ENCODE measurements at regions of chr5 and their contacts with region 1.

Region 1: GRCh38 chr5:38780950-38781349 is 64.9 kb upstream of the OSMR start:
- DNase-seq: no peak
- H3K4me3 ChIP-seq: no peak overlapping the region
- CTCF ChIP-seq: peak; percentile 33

Region 2: GRCh38 chr5:38673671-38674071 is 107.3 kb before region 1 on chr5:
- CTCF ChIA-PET with region 1: no interaction called
- POLR2A ChIA-PET with region 1: no interaction called
- DNase-seq: no peak
- H3K4me3 ChIP-seq: no peak overlapping the region
- CTCF ChIP-seq: no peak

Region 3: GRCh38 chr5:38765399-38765861 is 15.5 kb before region 1 on chr5:
- CTCF ChIA-PET with region 1: interaction called, 12 read pairs
- POLR2A ChIA-PET with region 1: interaction called, 3 read pairs
- DNase-seq: peak; percentile 38
- H3K4me3 ChIP-seq: no peak overlapping the region
- CTCF ChIP-seq: no peak

Measured in AG04449 (cell line).